GM10248 (cell line): ENCODE measurements at regions of chr2 and their contacts with region 1.

Region 1: GRCh38 chr2:202178342-202178958 is 59.9 kb downstream of the SUMO1 start:
- DNase-seq: peak; percentile 57
- CTCF ChIP-seq: peak; percentile 80

Region 2: GRCh38 chr2:202149155-202149762 is 29.2 kb before region 1 on chr2:
- CTCF ChIA-PET with region 1: no interaction called
- POLR2A ChIA-PET with region 1: no interaction called
- DNase-seq: no peak
- CTCF ChIP-seq: no peak

Region 3: DNA sequence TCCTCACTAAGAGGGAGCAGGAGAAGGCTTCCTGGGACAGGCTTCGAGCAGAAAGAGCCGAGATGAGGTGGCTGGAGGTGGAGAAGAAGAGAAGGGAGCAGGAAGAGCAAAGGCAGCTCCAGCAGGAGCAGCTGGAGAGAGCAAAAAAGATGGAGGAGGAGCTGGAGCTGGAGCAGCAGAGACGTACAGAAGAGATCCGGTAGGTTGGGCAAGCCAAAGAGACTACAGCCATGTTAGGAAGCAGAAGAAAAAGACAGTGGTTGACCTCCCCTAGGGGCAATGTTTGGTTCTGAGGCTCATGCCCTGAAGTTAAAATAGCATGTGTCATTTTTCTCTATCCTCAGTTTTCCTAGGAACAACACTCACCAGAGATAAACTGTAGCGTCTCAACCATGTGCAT is 14.9 kb after region 1 on chr2:
- CTCF ChIA-PET with region 1: interaction called, 17 read pairs
- POLR2A ChIA-PET with region 1: no interaction called
- DNase-seq: no peak
- CTCF ChIP-seq: no peak

Region 4: GRCh38 chr2:202681688-202682205 is 503.3 kb after region 1 on chr2:
- CTCF ChIA-PET with region 1: no interaction called
- POLR2A ChIA-PET with region 1: no interaction called
- DNase-seq: no peak
- CTCF ChIP-seq: no peak